Breast epithelium (tissue), 4 donors: ENCODE measurements at regions of chr18 and their contacts with region 1.

Region 1: DNA sequence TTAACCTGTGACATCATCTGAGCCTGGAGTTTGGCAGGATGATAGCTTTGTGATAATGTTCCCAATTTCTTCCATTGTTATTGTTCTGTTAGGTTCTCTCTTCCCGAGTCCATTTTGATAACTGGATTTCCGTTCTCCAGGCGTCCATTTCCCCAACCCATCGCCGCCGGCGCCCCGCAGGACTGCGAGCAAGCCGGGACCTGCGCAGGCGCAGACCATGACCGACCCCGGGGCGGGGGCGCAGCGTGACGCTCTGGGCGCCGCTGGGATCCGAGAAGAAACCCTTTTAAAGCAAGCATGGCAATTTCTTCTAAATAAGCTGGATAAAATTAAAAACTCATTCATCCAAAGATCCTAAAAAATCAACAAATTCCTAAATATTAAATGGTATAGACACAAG is at the start of gene SLC25A52:
- DNase-seq: no peak
- H3K4me3 ChIP-seq: no peak within 1 kb of the TSS
- H3K27ac ChIP-seq: no peak within 1 kb of the TSS
- H3K4me1 ChIP-seq: no peaks in the 10 kb centered on the region
- H3K27me3 ChIP-seq: no peaks in the 10 kb centered on the region
- CTCF ChIP-seq: no peak
- POLR2A ChIP-seq: no peak
- total RNA-seq, gene SLC25A52: 0.59 TPM in 1 of 3 donors, not detected in the others

Region 2: GRCh38 chr18:31746396-31746795 is 14.3 kb before region 1 on chr18:
- intact Hi-C with region 1: loop called (anchors 1 kb)
- DNase-seq: no peak
- H3K4me3 ChIP-seq: no peak overlapping the region
- H3K27ac ChIP-seq: no peak overlapping the region
- H3K4me1 ChIP-seq: no peaks in the 10 kb centered on the region
- H3K27me3 ChIP-seq: no peaks in the 10 kb centered on the region
- CTCF ChIP-seq: no peak
- POLR2A ChIP-seq: no peak